ENCODE measurements at regions of chr1 and their contacts with region 1.

Region 1: GRCh38 chr1:158055854-158056253 is 62.4 kb downstream of the KIRREL1 start:
- DNase-seq: no peak
- H3K4me3 ChIP-seq: no peak overlapping the region
- H3K27ac ChIP-seq: no peak overlapping the region
- H3K4me1 ChIP-seq: peaks cover 71% of the 10 kb centered on the region
- H3K27me3 ChIP-seq: no peaks in the 10 kb centered on the region
- CTCF ChIP-seq: no peak

Region 2: GRCh38 chr1:158035976-158036583 is 19.8 kb before region 1 on chr1:
- CTCF ChIA-PET with region 1: interaction called, 11 read pairs
- POLR2A ChIA-PET with region 1: no interaction called
- intact Hi-C with region 1: no loop called
- DNase-seq: peak; percentile 72
- H3K4me3 ChIP-seq: no peak overlapping the region
- H3K27ac ChIP-seq: no peak overlapping the region
- H3K4me1 ChIP-seq: peaks cover 59% of the 10 kb centered on the region
- H3K27me3 ChIP-seq: no peaks in the 10 kb centered on the region
- CTCF ChIP-seq: peak; percentile 89

Region 3: GRCh38 chr1:158067662-158068061 is 11.8 kb after region 1 on chr1:
- CTCF ChIA-PET with region 1: no interaction called
- POLR2A ChIA-PET with region 1: no interaction called
- intact Hi-C with region 1: no loop called
- DNase-seq: no peak
- H3K4me3 ChIP-seq: no peak overlapping the region
- H3K27ac ChIP-seq: peak overlapping the region; percentile 23
- H3K4me1 ChIP-seq: peaks cover 45% of the 10 kb centered on the region
- H3K27me3 ChIP-seq: no peaks in the 10 kb centered on the region
- CTCF ChIP-seq: no peak

Measured in A673 (cell line).